SK-N-SH (cell line): ENCODE measurements at regions of chr1 and their contacts with region 1.

Region 1: GRCh38 chr1:92858564-92859399 is 26.9 kb downstream of the RPL5 start:
- DNase-seq: peak; percentile 71
- H3K4me3 ChIP-seq: no peak overlapping the region; a peak in 1 of 4 replicates
- H3K27ac ChIP-seq: no peak overlapping the region
- H3K4me1 ChIP-seq: peaks cover 0 to 6% of the 10 kb centered on the region in 2 experiments; a peak in 1 of 4 replicates
- H3K27me3 ChIP-seq: no peaks in the 10 kb centered on the region
- CTCF ChIP-seq: peak; percentile 99
- EP300 ChIP-seq: no peak
- RAD21 ChIP-seq: peak; percentile 99

Region 2: GRCh38 chr1:92277105-92277723 is 581.6 kb before region 1 on chr1:
- CTCF ChIA-PET with region 1: no interaction called
- POLR2A ChIA-PET with region 1: no interaction called
- DNase-seq: no peak
- H3K4me3 ChIP-seq: no peak overlapping the region
- H3K27ac ChIP-seq: no peak overlapping the region
- H3K4me1 ChIP-seq: no peaks in the 10 kb centered on the region
- H3K27me3 ChIP-seq: no peaks in the 10 kb centered on the region
- CTCF ChIP-seq: no peak
- EP300 ChIP-seq: no peak
- RAD21 ChIP-seq: no peak

Region 3: DNA sequence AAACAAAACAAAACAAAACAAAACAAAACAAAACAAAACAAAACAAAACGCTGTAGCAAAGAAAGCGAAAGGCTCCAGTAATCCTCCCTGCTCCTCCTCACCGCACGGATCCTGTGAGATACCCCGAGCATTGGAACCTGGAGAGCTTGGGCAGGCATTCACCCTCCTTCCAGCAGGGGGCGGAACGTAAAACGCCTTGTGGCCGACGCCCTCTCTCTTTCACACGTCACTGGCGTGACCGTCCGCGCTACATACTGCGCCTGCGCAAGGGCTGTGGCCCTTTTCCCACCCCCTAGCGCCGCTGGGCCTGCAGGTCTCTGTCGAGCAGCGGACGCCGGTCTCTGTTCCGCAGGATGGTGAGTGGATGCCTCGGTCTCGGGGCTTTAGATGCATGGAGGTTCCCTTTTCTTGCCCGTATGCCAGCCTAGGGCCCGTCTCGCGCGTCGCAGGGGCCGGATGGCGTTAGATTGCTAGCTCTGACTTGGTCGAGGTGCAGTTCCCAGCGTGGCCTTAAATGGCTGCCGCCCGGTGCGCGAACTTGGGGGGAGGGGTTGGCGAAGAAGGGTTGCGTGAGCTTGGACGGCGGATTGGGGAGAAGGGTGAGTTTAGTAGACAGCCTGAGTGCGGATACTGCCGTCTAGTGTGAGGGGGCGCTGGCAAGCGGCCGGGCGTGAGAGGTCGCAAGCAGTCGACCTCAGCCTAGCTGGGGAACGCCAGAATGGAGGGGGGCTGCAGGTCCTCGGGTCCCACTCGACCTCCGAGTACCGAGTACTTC is 26.8 kb before region 1 on chr1 and contains the start of gene RPL5:
- CTCF ChIA-PET with region 1: interaction called, 15 read pairs
- POLR2A ChIA-PET with region 1: no interaction called
- DNase-seq: peak; percentile 95
- H3K4me3 ChIP-seq: peak within 1 kb of the TSS; percentile 94 to 99
- H3K27ac ChIP-seq: peak within 1 kb of the TSS; percentile 74 to 97
- H3K4me1 ChIP-seq: peaks cover 15 to 35% of the 10 kb centered on the region in 2 experiments; a peak in 3 of 4 replicates
- H3K27me3 ChIP-seq: no peaks in the 10 kb centered on the region
- CTCF ChIP-seq: peak; percentile 93
- EP300 ChIP-seq: no peak
- RAD21 ChIP-seq: peak; percentile 27; the same call in 1 of the 2 replicates
- polyA plus RNA-seq, gene RPL5: 1,489 and 2,038 TPM in 2 replicates

Region 4: DNA sequence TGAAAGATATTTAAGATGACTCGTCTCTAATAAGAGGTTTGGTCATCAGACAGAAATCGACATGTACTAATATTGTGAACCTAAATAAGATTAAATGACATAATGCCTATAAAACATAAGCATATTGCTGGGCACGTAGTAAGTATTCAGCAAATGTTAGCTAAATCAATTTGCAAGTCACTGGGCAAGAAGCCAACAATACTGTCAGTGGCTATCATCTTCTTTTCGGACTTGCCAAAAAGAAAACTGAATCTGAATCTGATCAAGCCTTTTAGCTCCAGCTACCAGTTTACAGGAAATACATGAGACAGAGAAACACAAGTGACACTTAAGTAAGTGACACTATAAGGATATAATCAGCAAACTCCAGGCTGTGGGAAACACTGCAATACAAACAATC is 19.0 kb after region 1 on chr1:
- CTCF ChIA-PET with region 1: interaction called, 46 read pairs
- POLR2A ChIA-PET with region 1: no interaction called
- DNase-seq: peak; percentile 24
- H3K4me3 ChIP-seq: no peak overlapping the region; a peak in 1 of 4 replicates
- H3K27ac ChIP-seq: peak overlapping the region in 1 of 2 experiments; percentile 79; a peak in 2 of 4 replicates
- H3K4me1 ChIP-seq: peaks cover 0 to 19% of the 10 kb centered on the region in 2 experiments; a peak in 2 of 4 replicates
- H3K27me3 ChIP-seq: no peaks in the 10 kb centered on the region
- CTCF ChIP-seq: no peak
- EP300 ChIP-seq: 0 out of 4 replicates have a peak, but pooled peaks of 1 of the 2 experiments have one; percentile 15
- RAD21 ChIP-seq: no peak

Region 5: DNA sequence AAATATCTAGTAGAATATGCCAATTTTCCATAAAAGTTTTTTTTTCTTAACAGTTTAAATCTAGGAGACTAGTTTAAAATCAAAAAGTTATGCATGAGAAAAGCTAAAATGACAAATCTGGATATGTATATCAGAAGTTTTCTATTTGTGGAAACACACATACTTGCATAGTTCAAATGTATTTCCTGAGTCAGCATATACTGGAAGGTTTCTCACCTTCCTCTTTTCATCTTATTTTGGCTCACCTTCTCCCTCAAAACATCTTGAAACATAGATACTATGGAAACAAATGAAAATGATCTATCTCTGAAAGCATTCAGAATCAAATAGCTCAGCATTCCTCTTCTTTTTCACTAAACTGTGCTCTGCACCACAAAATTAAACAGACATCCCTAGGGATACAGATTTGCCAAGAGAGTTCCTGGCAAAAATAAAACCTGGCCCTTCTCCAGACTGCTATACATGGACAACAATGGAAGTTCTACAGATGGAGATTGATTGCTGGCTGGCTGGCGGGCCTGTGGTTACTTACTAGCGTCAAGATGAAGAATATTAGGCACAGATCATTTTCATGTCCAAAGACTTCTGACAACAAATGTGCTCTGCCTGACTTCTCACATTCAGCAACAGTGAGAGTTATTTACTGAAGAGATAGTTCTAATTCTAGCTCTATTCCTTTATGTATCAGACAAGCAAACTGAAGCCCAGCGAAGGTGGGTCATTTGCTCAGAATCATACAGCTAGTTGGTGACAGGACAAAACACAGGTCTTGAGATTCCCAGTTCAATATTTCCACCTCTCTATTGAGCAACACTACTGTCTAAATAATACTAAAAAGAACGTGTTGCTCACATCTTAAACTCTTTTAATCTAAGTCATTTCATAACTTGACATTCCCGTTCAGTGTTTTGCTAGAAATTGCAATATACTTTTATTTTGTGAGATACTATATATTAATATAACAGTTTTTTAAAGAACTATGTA is 75.9 kb after region 1 on chr1:
- CTCF ChIA-PET with region 1: interaction called, 10 read pairs
- POLR2A ChIA-PET with region 1: no interaction called
- DNase-seq: peak; percentile 46
- H3K4me3 ChIP-seq: no peak overlapping the region
- H3K27ac ChIP-seq: peak overlapping the region; percentile 65 to 85
- H3K4me1 ChIP-seq: peaks cover 18 to 31% of the 10 kb centered on the region in 2 experiments; a peak in 3 of 4 replicates
- H3K27me3 ChIP-seq: no peaks in the 10 kb centered on the region
- CTCF ChIP-seq: no peak
- EP300 ChIP-seq: peak; percentile 90 to 97
- RAD21 ChIP-seq: peak; percentile 16; the same call in 1 of the 2 replicates

Region 6: GRCh38 chr1:92960395-92961130 is 101.8 kb after region 1 on chr1:
- CTCF ChIA-PET with region 1: interaction called, 163 read pairs
- POLR2A ChIA-PET with region 1: no interaction called
- DNase-seq: peak; percentile 79
- H3K4me3 ChIP-seq: peak overlapping the region; percentile 82 to 83
- H3K27ac ChIP-seq: peak overlapping the region; percentile 66 to 84
- H3K4me1 ChIP-seq: peaks cover 8% of the 10 kb centered on the region in 2 experiments; a peak in 3 of 4 replicates
- H3K27me3 ChIP-seq: no peaks in the 10 kb centered on the region
- CTCF ChIP-seq: peak; percentile 72
- EP300 ChIP-seq: no peak
- RAD21 ChIP-seq: peak; percentile 88

Region 7: GRCh38 chr1:92994105-92994712 is 135.4 kb after region 1 on chr1:
- CTCF ChIA-PET with region 1: interaction called, 193 read pairs
- POLR2A ChIA-PET with region 1: no interaction called
- DNase-seq: peak; percentile 59
- H3K4me3 ChIP-seq: no peak overlapping the region; a peak in 1 of 4 replicates
- H3K27ac ChIP-seq: no peak overlapping the region
- H3K4me1 ChIP-seq: no peaks in the 10 kb centered on the region; a peak in 1 of 4 replicates
- H3K27me3 ChIP-seq: no peaks in the 10 kb centered on the region
- CTCF ChIP-seq: peak; percentile 85
- EP300 ChIP-seq: no peak
- RAD21 ChIP-seq: peak; percentile 95

Region 8: GRCh38 chr1:93061895-93062792 is 203.4 kb after region 1 on chr1:
- CTCF ChIA-PET with region 1: interaction called, 16 read pairs
- POLR2A ChIA-PET with region 1: no interaction called
- DNase-seq: peak; percentile 51
- H3K4me3 ChIP-seq: no peak overlapping the region; a peak in 1 of 4 replicates
- H3K27ac ChIP-seq: no peak overlapping the region
- H3K4me1 ChIP-seq: no peaks in the 10 kb centered on the region
- H3K27me3 ChIP-seq: peaks cover 9% of the 10 kb centered on the region; the same call in 1 of the 2 replicates
- CTCF ChIP-seq: peak; percentile 60
- EP300 ChIP-seq: no peak
- RAD21 ChIP-seq: peak; percentile 71